ENCODE measurements at regions of chr21 and their contacts with region 1.

Region 1: DNA sequence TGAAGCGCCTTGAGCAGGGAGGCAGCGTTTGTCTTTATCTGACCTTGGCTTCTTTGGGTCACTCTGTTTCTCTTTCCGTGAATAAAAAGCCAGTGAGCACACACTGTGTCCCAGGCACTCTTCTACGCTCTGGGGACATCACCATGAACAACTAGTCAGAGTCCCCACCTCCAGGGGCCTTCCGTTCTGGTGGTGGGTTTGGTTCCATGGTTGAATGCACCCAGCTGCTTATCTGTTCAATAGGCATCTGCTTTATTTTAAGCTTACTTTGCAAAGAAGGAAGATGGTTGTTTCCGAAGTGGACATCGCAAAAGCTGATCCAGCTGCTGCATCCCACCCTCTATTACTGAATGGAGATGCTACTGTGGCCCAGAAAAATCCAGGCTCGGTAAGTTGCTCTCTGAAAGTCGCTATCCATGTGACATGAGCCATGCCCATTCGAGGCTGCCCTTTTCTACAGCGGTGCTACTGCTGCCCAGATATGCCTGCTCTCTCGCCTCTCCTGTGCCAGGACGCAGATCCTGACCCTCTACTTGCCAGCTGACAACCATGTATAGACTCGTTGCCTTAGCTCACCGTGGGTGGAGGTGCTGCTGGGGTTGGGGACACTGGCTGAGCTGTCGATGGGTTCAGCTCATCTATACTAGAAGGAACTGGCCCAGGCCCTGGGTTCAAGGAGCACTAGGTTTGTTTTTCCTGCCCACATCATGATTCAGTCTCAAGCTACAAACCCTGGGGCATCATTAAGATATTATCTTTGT is 5.9 kb downstream of the MX1 start:
- DNase-seq: no peak
- ATAC-seq: no peak
- H3K4me3 ChIP-seq: no peak overlapping the region
- H3K27ac ChIP-seq: no peak overlapping the region
- H3K4me1 ChIP-seq: peaks cover 2% of the 10 kb centered on the region
- H3K27me3 ChIP-seq: no peaks in the 10 kb centered on the region

Region 2: DNA sequence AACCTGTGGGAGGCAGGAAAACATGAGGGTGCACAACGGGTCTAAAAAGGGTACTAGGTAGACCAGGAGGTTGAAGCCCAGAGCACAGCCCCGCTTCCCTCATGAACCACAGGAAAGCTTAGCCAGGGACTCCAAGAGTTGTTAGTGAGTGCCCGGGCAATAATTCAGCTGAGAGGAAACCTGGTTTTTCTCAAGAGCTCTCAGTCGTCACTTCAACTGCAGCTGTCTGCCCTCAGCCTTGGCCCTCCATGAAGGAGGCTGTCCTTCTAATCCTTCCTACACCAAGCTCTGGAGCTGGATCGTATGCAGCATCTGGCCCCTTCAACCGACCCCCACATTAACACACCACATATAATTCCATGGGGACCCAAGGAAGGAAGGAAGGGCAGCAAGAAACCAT is 341.0 kb before region 1 on chr21:
- intact Hi-C with region 1: no loop called
- DNase-seq: no peak
- ATAC-seq: no peak
- H3K4me3 ChIP-seq: no peak overlapping the region
- H3K27ac ChIP-seq: no peak overlapping the region
- H3K4me1 ChIP-seq: no peaks in the 10 kb centered on the region
- H3K27me3 ChIP-seq: no peaks in the 10 kb centered on the region

Region 3: GRCh38 chr21:41497008-41497407 is 65.0 kb after region 1 on chr21:
- intact Hi-C with region 1: loop called in 1 of 4 experiments (anchors 10 kb)
- DNase-seq: no peak
- ATAC-seq: no peak
- H3K4me3 ChIP-seq: no peak overlapping the region
- H3K27ac ChIP-seq: no peak overlapping the region
- H3K4me1 ChIP-seq: no peaks in the 10 kb centered on the region
- H3K27me3 ChIP-seq: no peaks in the 10 kb centered on the region